Activated B cell treated with CpG ODN at 0.5 μM for 24 hours (primary cell): ENCODE measurements at regions of chr9 and their contacts with region 1.

Region 1: GRCh38 chr9:36995927-36996705 is 38.0 kb downstream of the PAX5 start:
- DNase-seq: peak; percentile 56
- ATAC-seq: peak; percentile 29
- H3K4me3 Mint-ChIP-seq: peak overlapping the region; percentile 47
- H3K27ac Mint-ChIP-seq: peak overlapping the region; percentile 97
- H3K4me1 Mint-ChIP-seq: peaks cover 96% of the 10 kb centered on the region
- H3K27me3 Mint-ChIP-seq: no peaks in the 10 kb centered on the region
- CTCF ChIP-seq: no peak

Region 2: DNA sequence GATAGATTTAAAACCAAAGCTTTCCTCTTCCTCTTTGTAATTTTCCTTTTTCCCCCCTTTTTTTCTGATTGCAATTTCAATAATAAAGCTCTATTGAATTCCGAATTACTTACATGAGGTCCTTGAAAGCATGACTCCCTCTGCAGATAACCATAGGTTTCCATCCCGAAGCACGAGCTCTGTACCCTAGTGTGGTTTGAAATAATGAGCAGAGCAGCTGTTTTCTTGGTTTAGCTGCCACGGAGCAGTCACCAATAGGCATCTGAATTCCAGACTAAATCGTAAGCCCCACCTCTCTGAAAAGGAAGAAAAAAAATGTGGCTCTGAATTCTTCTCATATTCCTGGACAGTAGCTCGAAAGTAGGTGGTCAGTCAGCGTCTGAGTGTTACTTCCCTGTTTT is 719.3 kb before region 1 on chr9:
- CTCF ChIA-PET with region 1: no interaction called
- POLR2A ChIA-PET with region 1: no interaction called
- intact Hi-C with region 1: no loop called
- DNase-seq: no peak
- ATAC-seq: no peak
- H3K4me3 Mint-ChIP-seq: no peak overlapping the region
- H3K27ac Mint-ChIP-seq: no peak overlapping the region
- H3K4me1 Mint-ChIP-seq: no peaks in the 10 kb centered on the region
- H3K27me3 Mint-ChIP-seq: no peaks in the 10 kb centered on the region
- CTCF ChIP-seq: no peak

Region 3: GRCh38 chr9:36632892-36633291 is 363.2 kb before region 1 on chr9:
- CTCF ChIA-PET with region 1: no interaction called
- POLR2A ChIA-PET with region 1: no interaction called
- intact Hi-C with region 1: loop called (anchors 10 kb)
- DNase-seq: no peak
- ATAC-seq: no peak
- H3K4me3 Mint-ChIP-seq: no peak overlapping the region
- H3K27ac Mint-ChIP-seq: no peak overlapping the region
- H3K4me1 Mint-ChIP-seq: no peaks in the 10 kb centered on the region
- H3K27me3 Mint-ChIP-seq: no peaks in the 10 kb centered on the region
- CTCF ChIP-seq: peak; percentile 24

Region 4: GRCh38 chr9:37010180-37010579 is 14.1 kb after region 1 on chr9:
- CTCF ChIA-PET with region 1: interaction called, 6 read pairs
- POLR2A ChIA-PET with region 1: interaction called, 48 read pairs
- intact Hi-C with region 1: loop called (anchors 1 kb)
- DNase-seq: no peak
- ATAC-seq: peak; percentile 36
- H3K4me3 Mint-ChIP-seq: peak overlapping the region; percentile 68
- H3K27ac Mint-ChIP-seq: peak overlapping the region; percentile 93
- H3K4me1 Mint-ChIP-seq: peaks cover 91% of the 10 kb centered on the region
- H3K27me3 Mint-ChIP-seq: no peaks in the 10 kb centered on the region
- CTCF ChIP-seq: no peak

Region 5: GRCh38 chr9:37309136-37309535 is 313.0 kb after region 1 on chr9:
- CTCF ChIA-PET with region 1: interaction called, 11 read pairs
- POLR2A ChIA-PET with region 1: no interaction called
- intact Hi-C with region 1: loop called (anchors 1 kb)
- DNase-seq: no peak
- ATAC-seq: peak; percentile 87
- H3K4me3 Mint-ChIP-seq: no peak overlapping the region
- H3K27ac Mint-ChIP-seq: peak overlapping the region; percentile 84
- H3K4me1 Mint-ChIP-seq: peaks cover 43% of the 10 kb centered on the region
- H3K27me3 Mint-ChIP-seq: no peaks in the 10 kb centered on the region
- CTCF ChIP-seq: no peak

Region 6: DNA sequence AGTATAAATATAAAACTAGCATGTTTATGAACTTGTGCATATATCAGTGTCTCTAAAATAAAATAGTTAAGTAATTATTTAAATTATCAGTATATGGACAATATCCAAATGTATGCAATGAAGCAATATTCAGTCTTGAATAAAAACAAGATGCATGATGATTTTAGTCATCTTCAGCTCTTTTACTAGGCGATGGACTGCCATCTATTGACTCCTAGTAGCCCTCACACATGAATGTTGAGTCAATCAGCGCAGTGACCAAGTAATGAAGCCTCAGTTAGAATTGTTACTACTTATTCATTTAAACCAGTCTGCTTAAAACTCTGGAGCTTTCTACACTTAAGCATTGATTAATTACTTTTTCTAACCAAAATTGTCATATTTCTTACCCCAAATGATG is 333.5 kb after region 1 on chr9:
- CTCF ChIA-PET with region 1: interaction called, 19 read pairs
- POLR2A ChIA-PET with region 1: interaction called, 9 read pairs
- intact Hi-C with region 1: loop called (anchors 1 kb)
- DNase-seq: no peak
- ATAC-seq: peak; percentile 47
- H3K4me3 Mint-ChIP-seq: peak overlapping the region; percentile 33
- H3K27ac Mint-ChIP-seq: peak overlapping the region; percentile 83
- H3K4me1 Mint-ChIP-seq: peaks cover 71% of the 10 kb centered on the region
- H3K27me3 Mint-ChIP-seq: no peaks in the 10 kb centered on the region
- CTCF ChIP-seq: no peak